ENCODE measurements at regions of chr14 and their contacts with region 1.

Region 1: GRCh38 chr14:22570132-22570949 is 18.7 kb downstream of the DAD1 start:
- DNase-seq: peak; percentile 62

Region 2: DNA sequence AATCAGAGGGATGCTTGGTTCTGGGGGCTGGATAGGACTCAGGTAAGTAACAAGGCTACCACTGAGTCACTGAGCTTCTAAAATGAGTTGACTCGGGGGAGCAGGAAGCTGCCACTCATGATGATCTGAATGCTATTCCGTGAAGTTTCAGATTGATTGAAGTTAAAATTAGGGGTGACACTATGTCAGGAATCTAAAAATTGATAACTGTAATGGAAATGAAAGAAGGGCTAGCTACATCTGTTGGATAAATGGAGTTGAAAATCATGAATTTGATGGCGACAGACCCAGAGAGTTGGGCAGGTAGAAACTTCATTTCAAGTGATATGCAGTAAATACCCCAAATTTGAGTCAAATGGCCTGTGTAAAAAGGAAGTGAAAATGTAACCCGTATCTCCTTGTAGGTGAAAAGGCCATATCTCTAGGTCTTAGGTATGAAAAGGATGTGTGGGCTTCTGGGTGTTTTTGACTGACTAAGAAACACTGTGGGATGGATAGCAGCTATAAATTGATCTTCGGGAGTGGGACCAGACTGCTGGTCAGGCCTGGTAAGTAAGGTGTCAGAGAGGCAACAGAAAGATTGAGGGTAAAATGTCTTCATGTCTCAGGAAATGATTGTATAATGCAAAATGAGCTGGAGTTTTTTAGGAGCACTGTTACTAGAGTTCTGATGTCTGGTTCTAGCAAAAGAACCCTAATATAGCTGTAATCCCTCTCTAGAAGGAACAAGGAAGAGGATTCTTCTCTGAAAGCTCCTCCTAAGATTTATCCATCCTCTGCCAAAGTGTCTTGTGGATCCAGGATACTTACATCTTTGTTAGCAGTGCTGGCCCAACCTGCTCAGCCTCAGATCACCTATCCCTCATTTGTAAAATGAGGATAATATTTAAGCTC is 38.6 kb before region 1 on chr14:
- CTCF ChIA-PET with region 1: no interaction called
- POLR2A ChIA-PET with region 1: no interaction called
- DNase-seq: no peak

Region 3: GRCh38 chr14:22589096-22589839 is 18.9 kb after region 1 on chr14 and contains the start of gene DAD1:
- CTCF ChIA-PET with region 1: interaction called, 11 read pairs
- POLR2A ChIA-PET with region 1: interaction called, 23 read pairs
- DNase-seq: peak; percentile 98

Region 4: GRCh38 chr14:22653012-22653621 is 82.8 kb after region 1 on chr14:
- CTCF ChIA-PET with region 1: interaction called, 47 read pairs
- POLR2A ChIA-PET with region 1: interaction called, 3 read pairs
- DNase-seq: peak; percentile 77

Region 5: DNA sequence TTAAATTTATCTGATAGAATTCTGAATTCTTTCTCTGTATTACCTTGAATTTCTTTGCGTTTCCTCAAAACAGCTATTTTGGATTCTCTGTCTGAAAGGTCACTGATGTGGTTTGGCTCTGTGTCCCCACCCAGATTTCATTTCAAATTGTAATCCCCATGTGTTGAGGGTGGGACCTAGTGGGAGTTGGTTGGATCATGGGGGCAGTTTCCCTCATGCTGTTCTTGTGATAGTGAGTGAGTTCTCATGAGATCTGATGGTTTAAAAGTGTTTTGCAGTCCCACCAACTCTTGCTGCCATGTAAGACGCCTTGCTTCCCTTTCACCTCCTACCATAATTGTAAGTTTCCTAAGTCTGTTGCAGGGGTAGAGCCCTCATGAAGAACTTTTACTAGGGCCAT is 107.9 kb after region 1 on chr14:
- CTCF ChIA-PET with region 1: interaction called, 10 read pairs
- POLR2A ChIA-PET with region 1: no interaction called
- DNase-seq: no peak

Region 6: DNA sequence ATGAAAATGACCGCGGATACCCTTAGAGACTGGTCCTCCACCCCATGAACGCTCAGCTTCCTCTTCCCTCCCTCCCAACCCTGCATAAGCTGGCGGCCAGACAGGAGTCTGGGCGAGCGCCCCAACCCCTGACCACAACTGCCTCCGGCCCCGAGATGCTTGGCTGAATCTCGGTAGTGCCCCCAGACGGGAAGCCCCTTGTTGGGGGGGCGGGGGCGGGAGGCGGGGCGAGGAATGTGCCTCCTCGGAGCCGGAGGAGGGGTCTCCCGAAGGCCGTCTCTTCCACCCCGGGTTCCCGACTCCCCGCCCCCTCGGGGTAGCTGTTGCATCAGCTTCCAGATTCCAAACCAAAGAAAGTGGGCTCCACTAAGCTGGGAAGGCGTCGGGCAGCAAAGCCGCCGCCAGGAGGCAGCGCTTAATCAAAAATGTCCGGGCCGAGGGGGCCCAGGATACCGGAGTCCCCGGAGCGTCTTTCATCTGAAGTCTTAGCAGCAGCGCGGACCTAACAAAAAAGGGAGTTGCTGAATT is 252.3 kb after region 1 on chr14:
- CTCF ChIA-PET with region 1: interaction called, 11 read pairs
- POLR2A ChIA-PET with region 1: no interaction called
- DNase-seq: peak; percentile 79